PC-9 (cell line): ENCODE measurements at regions of chr16 and their contacts with region 1.

Region 1: DNA sequence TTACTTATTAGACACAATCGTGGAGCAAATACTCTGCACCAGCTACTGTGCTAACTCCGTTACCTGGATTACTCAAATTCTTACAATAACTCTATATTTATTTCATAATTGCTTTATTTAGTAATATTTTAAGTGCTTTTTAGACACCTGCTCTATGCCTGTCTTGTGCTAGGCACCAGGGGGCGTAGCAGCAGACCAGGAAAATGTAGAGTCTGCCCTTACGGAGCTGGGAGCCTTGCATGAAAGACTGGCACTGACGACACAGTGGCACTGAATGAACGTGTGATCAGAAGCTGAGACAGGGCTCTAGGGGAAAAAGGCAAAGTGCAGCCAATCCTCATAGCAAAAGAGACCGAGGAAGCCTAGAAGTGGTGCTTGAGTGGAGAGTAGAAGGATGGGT is 486.5 kb downstream of the CDH13 start:
- DNase-seq: no peak
- H3K4me3 ChIP-seq: no peak overlapping the region
- H3K27ac ChIP-seq: no peak overlapping the region
- H3K4me1 ChIP-seq: no peaks in the 10 kb centered on the region
- H3K27me3 ChIP-seq: peaks cover 80% of the 10 kb centered on the region
- CTCF ChIP-seq: peak; percentile 57

Region 2: DNA sequence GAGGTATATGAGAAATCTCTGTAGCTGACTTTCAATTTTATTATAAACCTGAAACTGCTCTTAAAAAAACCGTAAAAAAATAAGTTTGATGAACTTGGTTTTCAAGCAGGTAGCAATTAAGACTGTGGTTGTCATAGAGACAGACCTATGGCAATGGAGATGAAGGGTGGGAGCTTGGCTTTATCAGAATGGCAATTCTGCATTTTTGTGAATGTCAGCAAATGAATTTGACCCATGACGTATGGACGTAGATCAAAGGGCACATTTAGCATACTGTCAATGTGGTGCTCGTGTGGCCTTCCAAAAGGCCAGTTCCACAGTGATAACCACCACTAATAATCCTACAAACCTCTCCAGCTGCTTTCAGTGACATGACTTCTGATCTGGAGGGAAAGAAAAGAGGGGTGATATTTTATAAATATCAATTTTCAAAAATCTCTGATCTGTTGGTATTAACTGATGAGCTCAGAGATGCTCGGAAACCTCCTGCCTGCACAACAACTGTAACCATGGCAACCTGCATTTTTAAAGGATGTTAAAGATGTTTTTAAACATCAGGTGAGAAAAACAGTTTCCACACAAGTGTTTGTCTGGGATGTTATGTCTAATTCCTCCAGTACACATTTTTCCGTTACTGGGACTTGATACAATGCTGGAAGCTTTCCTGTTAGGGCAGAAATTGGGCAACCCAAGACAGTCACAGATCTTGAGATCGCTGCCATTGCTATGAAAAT is 47.1 kb after region 1 on chr16:
- CTCF ChIA-PET with region 1: no interaction called
- POLR2A ChIA-PET with region 1: no interaction called
- intact Hi-C with region 1: no loop called
- DNase-seq: no peak
- H3K4me3 ChIP-seq: no peak overlapping the region
- H3K27ac ChIP-seq: no peak overlapping the region
- H3K4me1 ChIP-seq: no peaks in the 10 kb centered on the region
- H3K27me3 ChIP-seq: no peaks in the 10 kb centered on the region
- CTCF ChIP-seq: no peak

Region 3: GRCh38 chr16:83185902-83186301 is 72.6 kb after region 1 on chr16:
- CTCF ChIA-PET with region 1: no interaction called
- POLR2A ChIA-PET with region 1: no interaction called
- intact Hi-C with region 1: no loop called
- DNase-seq: no peak
- H3K4me3 ChIP-seq: no peak overlapping the region
- H3K27ac ChIP-seq: no peak overlapping the region
- H3K4me1 ChIP-seq: no peaks in the 10 kb centered on the region
- H3K27me3 ChIP-seq: peaks cover 30% of the 10 kb centered on the region
- CTCF ChIP-seq: no peak

Region 4: GRCh38 chr16:83356266-83356665 is 242.9 kb after region 1 on chr16:
- CTCF ChIA-PET with region 1: no interaction called
- POLR2A ChIA-PET with region 1: no interaction called
- intact Hi-C with region 1: loop called (anchors 5 kb)
- DNase-seq: peak in 1 of 2 experiments; percentile 2
- H3K4me3 ChIP-seq: no peak overlapping the region
- H3K27ac ChIP-seq: no peak overlapping the region
- H3K4me1 ChIP-seq: no peaks in the 10 kb centered on the region
- H3K27me3 ChIP-seq: peaks cover 9% of the 10 kb centered on the region; the same call in 1 of the 2 replicates
- CTCF ChIP-seq: peak; percentile 69